Ascending aorta (tissue), 2 donors: ENCODE measurements at regions of chr10 and their contacts with region 1.

Region 1: DNA sequence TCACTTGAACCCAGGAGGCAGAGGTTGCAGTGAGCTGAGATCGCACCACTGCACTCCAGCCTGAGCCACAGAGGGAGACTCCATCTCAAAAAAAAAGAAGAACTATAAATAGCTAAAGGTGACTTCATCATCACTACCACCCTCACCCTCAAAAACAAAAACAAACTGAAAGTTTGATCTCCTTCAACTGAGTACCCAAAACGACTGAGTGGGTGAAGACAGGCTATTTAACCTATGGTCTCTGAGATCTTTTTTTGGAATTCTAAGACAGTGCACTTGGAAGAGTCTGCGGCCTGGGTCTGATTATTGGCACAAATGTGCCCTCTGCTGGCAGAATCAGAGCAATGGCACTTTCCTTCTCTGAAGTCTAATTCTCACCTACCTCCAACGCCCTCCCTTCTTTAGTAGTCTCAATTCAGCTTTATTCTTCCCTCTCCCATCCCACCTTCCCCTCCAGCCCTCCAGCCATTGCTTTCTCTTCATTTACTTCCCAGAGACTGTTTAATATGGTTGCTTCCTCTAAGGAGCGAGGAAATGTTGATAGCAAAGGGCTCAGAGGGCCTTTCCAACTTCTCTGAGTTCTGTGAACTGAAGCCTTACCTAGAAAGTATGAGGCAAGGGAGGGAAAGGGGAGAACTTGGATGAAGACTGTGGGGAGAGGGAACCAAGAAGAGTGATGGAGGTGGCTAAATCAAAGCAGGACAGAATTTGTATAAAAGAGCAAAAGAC is 2.9 kb upstream of the MYOZ1 start:
- DNase-seq: peak in 1 of 2 donors; percentile 74
- H3K4me3 ChIP-seq: no peak overlapping the region
- H3K27ac ChIP-seq: peak overlapping the region in 1 of 2 donors; percentile 48
- H3K4me1 ChIP-seq: peaks cover 7 to 17% of the 10 kb centered on the region in 2 donors
- H3K27me3 ChIP-seq: no peaks in the 10 kb centered on the region
- CTCF ChIP-seq: peak; percentile 70 to 87 (median 85)

Region 2: GRCh38 chr10:72386916-72387586 is 1257.1 kb before region 1 on chr10:
- intact Hi-C with region 1: no loop called
- DNase-seq: no peak
- H3K4me3 ChIP-seq: no peak overlapping the region
- H3K27ac ChIP-seq: no peak overlapping the region
- H3K4me1 ChIP-seq: no peaks in the 10 kb centered on the region
- H3K27me3 ChIP-seq: no peaks in the 10 kb centered on the region
- CTCF ChIP-seq: no peak

Region 3: DNA sequence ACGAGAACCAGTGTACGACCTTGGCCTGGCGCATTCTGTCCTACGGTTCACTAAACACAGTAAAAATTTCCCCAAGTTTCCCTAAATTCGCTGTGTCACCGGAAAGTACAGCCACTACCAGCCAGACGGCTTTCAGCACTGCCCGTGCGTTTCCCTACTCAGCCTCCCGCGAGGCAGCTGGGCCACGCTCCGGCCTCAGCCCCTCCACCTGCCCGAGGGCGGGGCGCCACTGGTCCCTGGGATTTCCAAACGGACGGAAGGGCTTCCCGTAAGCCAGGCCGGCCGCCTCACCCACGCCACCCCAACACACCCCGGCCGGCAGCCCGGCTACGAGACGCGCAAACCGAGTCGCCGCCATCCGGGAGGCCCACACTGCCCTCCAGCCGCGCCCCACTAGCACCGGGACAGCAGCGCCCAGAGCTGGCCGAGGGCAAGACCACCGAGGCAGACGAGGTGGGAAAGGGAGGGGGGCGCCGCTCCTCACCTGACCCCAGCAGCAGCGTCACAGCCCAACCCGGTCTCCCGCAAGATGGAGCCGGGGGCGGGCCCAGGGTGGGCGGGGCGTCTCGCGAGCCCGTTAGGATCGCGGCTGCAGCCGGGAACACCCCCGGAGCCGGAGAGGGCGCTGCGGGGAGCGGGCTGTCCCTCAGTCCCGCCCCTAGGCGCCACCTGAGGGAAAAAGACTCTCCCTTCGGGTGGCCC is 230.5 kb before region 1 on chr10 and contains the start of gene ANXA7:
- intact Hi-C with region 1: loop called (anchors 10 kb)
- DNase-seq: peak; percentile 63 to 96
- H3K4me3 ChIP-seq: peak within 1 kb of the TSS; percentile 87 to 93
- H3K27ac ChIP-seq: peak within 1 kb of the TSS; percentile 96 to 98
- H3K4me1 ChIP-seq: peaks cover 3 to 10% of the 10 kb centered on the region in 2 donors
- H3K27me3 ChIP-seq: no peaks in the 10 kb centered on the region
- CTCF ChIP-seq: peak in 1 of 3 experiments; percentile 45
- total RNA-seq, gene ANXA7: 63.2 TPM

Region 4: GRCh38 chr10:73529089-73529832 is 114.9 kb before region 1 on chr10:
- intact Hi-C with region 1: loop called (anchors 1 kb)
- DNase-seq: no peak
- H3K4me3 ChIP-seq: no peak overlapping the region
- H3K27ac ChIP-seq: no peak overlapping the region
- H3K4me1 ChIP-seq: no peaks in the 10 kb centered on the region
- H3K27me3 ChIP-seq: no peaks in the 10 kb centered on the region
- CTCF ChIP-seq: peak; percentile 77 to 83 (median 82)

Region 5: DNA sequence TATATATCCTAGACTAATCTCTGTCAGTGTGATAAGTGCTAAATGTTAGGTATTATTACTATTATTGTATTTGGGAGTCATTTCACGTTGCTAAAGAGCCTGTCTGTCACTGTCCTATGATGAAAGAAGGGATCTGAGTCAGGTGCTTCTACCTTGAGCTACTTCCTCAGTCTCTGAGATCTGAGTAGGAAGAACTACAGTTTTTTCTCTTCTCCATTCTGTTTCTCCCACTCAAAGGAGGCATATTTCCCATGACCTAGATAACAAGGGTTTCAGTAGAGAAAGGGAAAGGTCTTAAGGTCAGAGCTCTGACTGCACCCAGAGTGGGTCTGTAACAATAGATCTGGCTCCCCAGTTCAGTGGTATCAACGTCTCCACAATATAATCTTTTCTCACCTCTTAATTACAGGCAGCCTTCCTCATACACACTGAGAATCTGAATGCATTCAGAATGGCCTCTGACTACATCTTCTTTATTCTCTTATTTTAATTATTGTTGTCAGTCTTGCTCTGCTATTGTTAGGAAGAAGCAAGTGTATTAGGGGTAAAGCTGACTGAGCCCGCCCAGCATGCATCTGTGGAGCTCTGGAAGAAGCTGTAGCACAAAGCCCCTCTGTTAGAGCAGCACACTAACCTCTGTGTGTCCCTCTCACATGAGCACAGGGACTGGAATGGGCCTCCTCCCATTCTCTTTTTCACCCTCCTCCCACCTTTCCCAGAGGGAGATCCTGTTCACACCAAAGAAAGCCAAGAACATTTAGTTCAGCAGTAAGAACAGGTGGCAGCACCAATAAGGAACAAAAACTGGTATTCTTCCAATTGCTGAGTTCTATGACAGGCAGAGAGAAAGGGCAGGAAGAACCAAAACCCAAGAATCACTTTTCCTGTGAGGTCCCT is 91.1 kb before region 1 on chr10:
- intact Hi-C with region 1: no loop called
- DNase-seq: no peak
- H3K4me3 ChIP-seq: no peak overlapping the region
- H3K27ac ChIP-seq: peak overlapping the region in 1 of 2 donors; percentile 7
- H3K4me1 ChIP-seq: no peaks in the 10 kb centered on the region
- H3K27me3 ChIP-seq: no peaks in the 10 kb centered on the region
- CTCF ChIP-seq: no peak

Region 6: DNA sequence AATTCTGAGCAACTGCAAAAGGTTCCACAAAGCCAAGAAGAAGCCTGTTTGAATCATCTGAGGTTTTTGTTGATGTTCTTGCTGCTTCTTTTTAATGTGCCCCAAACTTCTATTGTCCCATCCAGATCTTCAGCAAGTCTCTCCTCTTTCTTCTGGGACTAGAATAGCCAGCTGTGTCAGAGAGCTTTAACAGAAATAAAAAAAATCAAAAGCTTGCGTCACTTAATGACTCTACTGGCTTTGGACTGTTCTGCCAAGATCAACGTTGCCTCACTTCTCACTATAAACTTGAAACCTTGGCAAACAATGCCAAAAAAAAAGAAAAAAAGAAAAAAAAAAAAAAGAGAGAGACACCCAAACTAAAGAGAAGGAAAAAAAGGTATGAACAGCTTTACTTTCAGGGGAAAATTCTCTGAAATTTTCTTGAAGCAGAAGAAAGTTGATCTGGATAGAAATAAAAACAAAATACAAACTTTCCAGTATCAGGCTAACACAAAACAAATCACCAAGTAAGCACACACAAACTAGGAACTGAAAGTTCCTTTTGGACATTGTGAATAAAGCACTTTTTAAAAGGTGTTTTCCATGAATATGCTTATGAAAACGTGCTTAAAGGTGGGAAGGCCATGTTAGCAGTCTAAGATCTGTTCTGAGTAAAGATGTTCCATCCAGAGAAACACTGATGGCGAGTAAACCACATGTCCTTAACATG is 67.8 kb before region 1 on chr10:
- intact Hi-C with region 1: loop called (anchors 5 kb)
- DNase-seq: peak in 1 of 2 donors; percentile 80
- H3K4me3 ChIP-seq: peak overlapping the region; percentile 29 to 55
- H3K27ac ChIP-seq: peak overlapping the region; percentile 81 to 83
- H3K4me1 ChIP-seq: peaks cover 13 to 37% of the 10 kb centered on the region in 2 donors
- H3K27me3 ChIP-seq: no peaks in the 10 kb centered on the region
- CTCF ChIP-seq: no peak

Region 7: GRCh38 chr10:73625884-73626752 is 18.1 kb before region 1 on chr10:
- intact Hi-C with region 1: loop called (anchors 1 kb)
- DNase-seq: peak; percentile 86 to 98
- H3K4me3 ChIP-seq: peak overlapping the region; percentile 70 to 97
- H3K27ac ChIP-seq: peak overlapping the region; percentile 77 to 79
- H3K4me1 ChIP-seq: peaks cover 0 to 11% of the 10 kb centered on the region in 2 donors
- H3K27me3 ChIP-seq: no peaks in the 10 kb centered on the region
- CTCF ChIP-seq: no peak

Region 8: DNA sequence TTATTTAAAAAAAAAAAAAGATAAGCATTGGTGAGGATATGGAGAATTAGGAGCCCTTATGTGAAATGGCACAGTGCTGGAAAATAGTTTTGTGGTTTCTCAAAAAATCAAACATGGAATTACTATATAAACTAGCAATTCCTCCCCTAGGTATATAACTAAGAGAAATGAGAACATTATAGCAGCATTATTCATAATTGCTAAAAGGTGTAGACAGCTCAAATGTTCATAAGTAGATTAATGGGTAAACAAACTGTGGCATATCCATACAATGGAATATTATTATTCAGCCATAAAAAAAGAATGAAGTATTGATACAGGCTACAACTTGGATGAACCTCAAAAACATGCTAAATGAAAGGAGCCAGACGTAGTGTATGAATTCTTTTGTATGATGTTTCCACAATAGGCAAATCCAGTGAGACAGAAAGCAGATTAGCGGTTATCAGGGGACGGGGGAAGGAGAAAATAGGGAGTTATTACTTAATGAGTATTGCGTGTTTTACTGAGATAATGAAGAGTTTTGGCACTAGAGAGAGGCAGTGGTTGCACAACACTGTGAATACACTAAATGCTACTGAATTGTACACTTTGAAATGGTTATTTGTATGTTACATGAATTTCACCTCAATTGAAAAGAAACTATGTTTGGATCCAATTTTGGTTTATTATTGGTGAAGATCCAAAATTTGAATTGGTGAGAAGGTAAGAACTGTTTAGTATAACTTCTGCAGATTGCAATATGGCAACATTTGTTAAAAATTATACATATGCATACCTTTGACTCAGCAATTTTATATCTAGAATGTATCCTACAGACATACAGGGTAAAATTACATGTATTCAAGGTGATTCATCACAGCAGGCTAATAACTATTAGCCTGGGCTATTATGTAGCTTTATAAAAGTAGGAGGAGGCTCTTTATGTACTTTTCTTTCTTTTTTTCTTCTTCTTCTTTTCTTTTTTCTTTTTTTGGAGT is 423.5 kb after region 1 on chr10:
- intact Hi-C with region 1: no loop called
- DNase-seq: no peak
- H3K4me3 ChIP-seq: no peak overlapping the region
- H3K27ac ChIP-seq: peak overlapping the region in 1 of 2 donors; percentile 25
- H3K4me1 ChIP-seq: peaks cover 0 to 7% of the 10 kb centered on the region in 2 donors
- H3K27me3 ChIP-seq: no peaks in the 10 kb centered on the region
- CTCF ChIP-seq: no peak